ENCODE measurements at regions of chr16 and their contacts with region 1.

Region 1: GRCh38 chr16:50806099-50807062 is 64.5 kb downstream of the CYLD start:
- DNase-seq: peak; percentile 78
- H3K4me3 Mint-ChIP-seq: peak overlapping the region; percentile 66
- H3K27ac Mint-ChIP-seq: peak overlapping the region; percentile 30
- H3K4me1 Mint-ChIP-seq: peaks cover 9% of the 10 kb centered on the region
- H3K27me3 Mint-ChIP-seq: no peaks in the 10 kb centered on the region

Region 2: GRCh38 chr16:50065624-50066481 is 740.5 kb before region 1 on chr16 and contains the start of gene HEATR3:
- intact Hi-C with region 1: loop called (anchors 1 kb)
- DNase-seq: peak; percentile 93
- H3K4me3 Mint-ChIP-seq: peak within 1 kb of the TSS; percentile 85
- H3K27ac Mint-ChIP-seq: peak within 1 kb of the TSS; percentile 90
- H3K4me1 Mint-ChIP-seq: peaks cover 39% of the 10 kb centered on the region
- H3K27me3 Mint-ChIP-seq: no peaks in the 10 kb centered on the region
- total RNA-seq, gene HEATR3: 29.1 and 30.7 TPM in 2 replicates

Region 3: DNA sequence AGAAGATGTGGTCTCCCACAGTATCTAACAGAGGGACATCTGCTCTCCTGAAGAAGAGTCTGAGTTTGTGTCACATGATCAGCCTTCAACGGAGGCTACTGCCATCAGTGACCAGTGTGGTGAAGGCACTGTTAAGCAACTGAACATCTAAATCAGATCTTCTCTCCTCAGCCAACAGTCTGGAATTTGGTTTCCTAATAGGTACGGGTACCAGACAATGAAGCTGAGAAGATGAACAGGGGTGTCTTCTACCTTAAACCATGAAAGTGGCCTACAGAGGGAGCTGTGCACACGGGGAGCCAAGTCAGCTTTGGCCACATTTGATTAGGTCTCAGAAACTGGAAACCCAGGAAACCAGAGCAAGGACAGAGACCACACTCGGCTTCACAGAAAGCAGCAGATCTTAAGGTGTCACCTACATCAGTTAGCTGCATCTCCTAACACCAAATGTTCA is 479.4 kb before region 1 on chr16:
- intact Hi-C with region 1: loop called (anchors 1 kb)
- DNase-seq: peak; percentile 68
- H3K4me3 Mint-ChIP-seq: no peak overlapping the region
- H3K27ac Mint-ChIP-seq: no peak overlapping the region
- H3K4me1 Mint-ChIP-seq: peaks cover 45% of the 10 kb centered on the region
- H3K27me3 Mint-ChIP-seq: no peaks in the 10 kb centered on the region

Region 4: GRCh38 chr16:50509521-50510341 is 296.6 kb before region 1 on chr16:
- intact Hi-C with region 1: loop called (anchors 1 kb)
- DNase-seq: peak; percentile 15
- H3K4me3 Mint-ChIP-seq: no peak overlapping the region
- H3K27ac Mint-ChIP-seq: no peak overlapping the region
- H3K4me1 Mint-ChIP-seq: no peaks in the 10 kb centered on the region
- H3K27me3 Mint-ChIP-seq: peaks cover 10% of the 10 kb centered on the region

Region 5: DNA sequence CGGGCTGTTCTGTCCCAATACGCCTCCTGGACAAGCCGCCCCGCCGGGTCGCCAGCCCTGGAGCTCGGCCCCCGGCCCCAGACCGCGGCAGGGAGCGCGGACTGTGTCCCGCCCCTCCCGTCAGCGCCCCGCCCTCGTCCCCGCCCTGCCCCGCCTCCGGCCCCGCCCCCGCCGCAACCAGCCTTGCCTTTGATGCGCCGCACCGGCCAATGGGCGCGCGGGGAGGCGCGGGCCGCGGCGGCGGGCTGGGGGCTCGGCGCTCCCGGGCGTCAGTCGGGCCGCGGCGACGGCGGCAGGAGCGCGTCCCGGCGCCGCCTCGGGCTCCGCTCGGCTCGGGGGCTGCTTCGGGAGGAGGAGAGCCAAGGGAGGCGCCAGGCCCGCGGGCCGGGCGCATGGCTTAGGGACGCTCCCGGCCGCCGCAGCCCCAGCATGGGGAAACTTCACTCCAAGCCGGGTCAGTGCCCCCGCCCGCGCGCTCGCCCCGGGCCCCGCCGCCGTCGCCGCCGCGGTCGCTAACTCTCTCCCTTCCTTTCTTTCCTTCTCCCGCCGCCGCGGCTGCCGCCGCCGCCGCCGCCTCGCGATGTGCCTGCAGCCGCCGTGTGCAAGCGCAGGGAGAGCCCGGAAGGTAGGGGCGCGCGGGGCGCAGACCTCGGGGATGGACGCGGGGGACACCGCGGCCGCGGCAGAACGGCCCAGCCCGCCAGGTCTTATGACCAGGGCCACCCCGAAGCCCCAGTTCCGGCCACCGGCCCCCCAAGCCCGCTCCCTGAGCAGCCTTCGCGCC is 258.1 kb before region 1 on chr16 and contains the start of gene NKD1:
- intact Hi-C with region 1: loop called (anchors 1 kb)
- DNase-seq: peak; percentile 65
- H3K4me3 Mint-ChIP-seq: peak within 1 kb of the TSS; percentile 91
- H3K27ac Mint-ChIP-seq: peak within 1 kb of the TSS; percentile 59
- H3K4me1 Mint-ChIP-seq: peaks cover 14% of the 10 kb centered on the region
- H3K27me3 Mint-ChIP-seq: peaks cover 37% of the 10 kb centered on the region
- total RNA-seq, gene NKD1: 1.1 and 1.4 TPM in 2 replicates

Region 6: DNA sequence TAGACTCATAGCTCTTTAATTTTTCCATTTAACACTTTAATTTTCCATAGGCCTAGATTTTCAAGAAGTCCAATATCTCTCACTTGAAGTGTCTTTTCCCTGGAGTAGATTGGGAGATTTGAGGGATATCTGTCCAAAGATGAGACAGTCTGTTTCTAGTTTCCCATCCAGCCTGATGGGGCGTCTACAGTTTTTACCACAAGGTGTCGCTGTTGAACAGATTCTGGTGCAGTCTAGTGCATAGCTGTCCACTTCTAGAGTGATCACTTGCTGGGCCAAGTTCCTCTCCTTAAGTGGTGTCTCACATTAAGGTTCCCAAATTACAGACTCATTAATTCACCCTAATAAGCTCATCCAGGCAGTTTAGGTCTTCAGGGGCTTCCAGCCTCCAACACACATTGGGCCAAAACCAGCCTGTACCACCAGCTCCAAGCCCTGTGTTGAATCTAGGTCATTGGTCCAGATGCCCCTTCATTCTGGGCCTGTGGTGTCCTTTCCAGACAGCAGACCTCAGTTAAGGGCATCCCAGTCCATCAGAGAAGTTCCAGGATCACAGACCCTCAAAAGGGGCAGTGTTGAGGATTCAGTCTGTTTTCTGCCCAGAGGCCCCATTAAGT is 134.6 kb before region 1 on chr16:
- intact Hi-C with region 1: loop called (anchors 1 kb)
- DNase-seq: peak; percentile 43
- H3K4me3 Mint-ChIP-seq: no peak overlapping the region
- H3K27ac Mint-ChIP-seq: no peak overlapping the region
- H3K4me1 Mint-ChIP-seq: peaks cover 41% of the 10 kb centered on the region
- H3K27me3 Mint-ChIP-seq: no peaks in the 10 kb centered on the region

Region 7: GRCh38 chr16:50781043-50781442 is 25.3 kb before region 1 on chr16:
- intact Hi-C with region 1: loop called (anchors 2 kb)
- DNase-seq: no peak
- H3K4me3 Mint-ChIP-seq: no peak overlapping the region
- H3K27ac Mint-ChIP-seq: peak overlapping the region; percentile 62
- H3K4me1 Mint-ChIP-seq: peaks cover 44% of the 10 kb centered on the region
- H3K27me3 Mint-ChIP-seq: no peaks in the 10 kb centered on the region